ENCODE measurements at regions of chr7 and their contacts with region 1.

Region 1: DNA sequence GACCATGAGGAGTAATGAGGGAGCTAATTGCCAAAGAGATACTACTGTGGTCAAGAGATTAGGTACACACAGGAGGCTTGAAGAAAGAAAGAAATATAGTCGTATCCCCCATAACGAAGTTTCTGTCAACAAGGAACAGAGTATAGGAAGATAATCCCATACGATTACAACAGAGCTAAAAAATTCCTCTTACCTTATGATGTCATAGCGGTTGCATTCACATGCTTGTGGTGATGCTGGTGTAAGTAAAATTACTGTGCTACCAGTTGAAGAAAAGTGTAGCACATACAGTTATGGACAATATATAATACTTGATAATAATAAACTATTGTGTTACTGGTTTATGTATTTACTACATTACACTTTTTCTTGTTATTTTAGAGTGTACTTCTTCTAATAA is 51.6 kb upstream of the CASD1 start:
- DNase-seq: no peak

Region 2: DNA sequence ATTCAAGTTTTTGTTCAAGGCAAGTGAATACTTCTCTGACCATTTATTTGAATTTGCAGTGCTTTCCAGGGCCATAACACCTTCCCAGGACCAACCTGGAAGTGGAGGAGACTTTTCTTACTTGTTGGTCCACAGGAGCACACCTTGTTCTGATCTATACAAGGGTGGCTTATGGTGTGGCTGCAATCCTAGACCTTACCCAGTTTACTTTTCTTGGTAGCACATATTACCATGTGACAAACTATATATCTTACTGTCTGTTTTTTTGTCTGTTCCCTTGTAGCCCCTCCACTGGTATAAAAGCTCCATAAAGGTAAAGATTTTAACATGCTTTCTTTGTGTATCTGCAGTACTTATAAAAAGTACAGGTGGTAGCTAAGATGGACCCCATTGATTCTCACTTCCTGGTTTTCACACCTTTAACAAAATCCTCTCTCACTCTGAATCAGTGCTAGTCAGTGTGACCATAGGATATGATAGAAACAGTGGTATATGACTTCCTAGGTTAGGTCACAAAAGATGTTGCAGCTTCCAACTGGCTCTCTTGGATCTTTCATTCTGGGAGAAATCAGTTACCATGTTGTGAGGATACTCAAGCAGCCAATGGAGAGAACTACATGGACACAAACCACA is 1022.1 kb after region 1 on chr7:
- intact Hi-C with region 1: loop called in 1 of 2 experiments (anchors 5 kb)
- DNase-seq: no peak

Measured in posterior vena cava (tissue), 2 donors.